Motor neuron (in vitro differentiated cells): ENCODE measurements at regions of chr3 and their contacts with region 1.

Region 1: DNA sequence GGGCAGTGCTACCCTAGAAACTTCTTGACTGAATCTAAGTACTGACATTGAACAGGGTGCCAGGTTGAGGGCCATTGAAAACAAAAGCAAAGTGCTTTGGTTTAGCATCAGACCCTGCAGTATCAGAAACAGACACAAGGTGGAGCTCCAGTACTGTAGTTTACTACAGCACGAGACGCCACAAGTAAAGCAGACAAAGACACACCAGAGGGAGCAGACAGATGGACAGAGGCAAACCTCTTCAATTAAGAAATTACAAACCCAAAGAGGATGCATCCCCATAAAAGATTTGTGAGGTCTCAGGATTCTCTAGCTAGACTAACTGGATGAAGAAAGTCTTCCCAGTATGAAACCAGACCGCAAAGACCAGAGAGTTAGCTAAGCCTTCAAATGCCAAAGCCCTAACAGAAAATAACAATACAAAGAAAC is 16.6 kb downstream of the TOP2B start:
- ATAC-seq: peak; percentile 58 to 98 (median 72)
- H3K4me3 ChIP-seq: no peak overlapping the region
- H3K27ac ChIP-seq: no peak overlapping the region
- H3K4me1 ChIP-seq: no peaks in the 10 kb centered on the region

Region 2: DNA sequence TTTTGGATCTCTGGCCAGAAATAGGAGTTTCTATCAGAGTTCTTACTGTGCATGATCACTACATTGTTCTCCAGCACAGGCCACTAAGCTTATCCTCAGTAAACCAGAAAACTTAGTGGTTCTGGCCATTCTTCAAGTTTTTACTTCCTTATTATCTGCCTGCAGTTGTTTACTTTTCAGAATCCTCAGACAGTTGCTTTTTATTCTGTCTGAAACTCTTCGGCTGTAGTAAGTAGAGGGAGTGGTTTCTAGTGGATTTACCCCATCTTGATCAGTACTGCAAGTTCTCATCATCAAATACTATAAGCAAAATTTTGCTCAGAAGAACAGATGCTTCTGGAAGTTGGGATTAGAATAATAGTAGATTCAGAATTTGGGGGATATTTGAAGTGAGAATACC is 413.1 kb before region 1 on chr3:
- in situ Hi-C with region 1: no loop called
- ATAC-seq: no peak
- H3K4me3 ChIP-seq: no peak overlapping the region
- H3K27ac ChIP-seq: no peak overlapping the region
- H3K4me1 ChIP-seq: peaks cover 0 to 1% of the 10 kb centered on the region in 2 donors

Region 3: DNA sequence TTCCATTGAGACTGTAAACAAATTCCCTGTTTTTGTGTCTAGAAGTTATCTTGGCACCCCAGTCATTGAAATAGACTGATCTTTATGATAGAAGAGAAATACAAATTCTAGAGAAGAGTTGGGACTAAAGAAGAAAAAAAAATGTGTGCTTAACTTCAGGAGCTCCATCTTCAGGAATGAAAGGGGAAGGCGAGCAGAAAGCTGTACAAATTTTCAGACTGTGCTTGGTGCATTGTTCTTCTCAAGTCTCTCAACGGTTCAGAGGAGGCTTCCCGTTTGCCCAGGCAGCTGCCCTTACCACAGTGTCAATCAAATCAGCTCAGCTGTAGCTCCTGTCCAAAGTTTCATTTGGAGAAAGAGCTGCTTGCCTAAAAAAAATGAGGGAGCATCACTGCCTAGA is 183.5 kb after region 1 on chr3:
- in situ Hi-C with region 1: loop called in 2 of 9 experiments (anchors 25 kb)
- ATAC-seq: peak in 3 of 8 experiments; percentile 62 to 74 (median 66)
- H3K4me3 ChIP-seq: no peak overlapping the region
- H3K27ac ChIP-seq: no peak overlapping the region
- H3K4me1 ChIP-seq: no peaks in the 10 kb centered on the region

Region 4: GRCh38 chr3:26712211-26713026 is 1064.3 kb after region 1 on chr3:
- in situ Hi-C with region 1: loop called in 1 of 9 experiments (anchors 25 kb)
- ATAC-seq: peak; percentile 52 to 81 (median 64)
- H3K4me3 ChIP-seq: no peak overlapping the region
- H3K27ac ChIP-seq: no peak overlapping the region
- H3K4me1 ChIP-seq: no peaks in the 10 kb centered on the region